ENCODE measurements at regions of chr16 and their contacts with region 1.

Region 1: DNA sequence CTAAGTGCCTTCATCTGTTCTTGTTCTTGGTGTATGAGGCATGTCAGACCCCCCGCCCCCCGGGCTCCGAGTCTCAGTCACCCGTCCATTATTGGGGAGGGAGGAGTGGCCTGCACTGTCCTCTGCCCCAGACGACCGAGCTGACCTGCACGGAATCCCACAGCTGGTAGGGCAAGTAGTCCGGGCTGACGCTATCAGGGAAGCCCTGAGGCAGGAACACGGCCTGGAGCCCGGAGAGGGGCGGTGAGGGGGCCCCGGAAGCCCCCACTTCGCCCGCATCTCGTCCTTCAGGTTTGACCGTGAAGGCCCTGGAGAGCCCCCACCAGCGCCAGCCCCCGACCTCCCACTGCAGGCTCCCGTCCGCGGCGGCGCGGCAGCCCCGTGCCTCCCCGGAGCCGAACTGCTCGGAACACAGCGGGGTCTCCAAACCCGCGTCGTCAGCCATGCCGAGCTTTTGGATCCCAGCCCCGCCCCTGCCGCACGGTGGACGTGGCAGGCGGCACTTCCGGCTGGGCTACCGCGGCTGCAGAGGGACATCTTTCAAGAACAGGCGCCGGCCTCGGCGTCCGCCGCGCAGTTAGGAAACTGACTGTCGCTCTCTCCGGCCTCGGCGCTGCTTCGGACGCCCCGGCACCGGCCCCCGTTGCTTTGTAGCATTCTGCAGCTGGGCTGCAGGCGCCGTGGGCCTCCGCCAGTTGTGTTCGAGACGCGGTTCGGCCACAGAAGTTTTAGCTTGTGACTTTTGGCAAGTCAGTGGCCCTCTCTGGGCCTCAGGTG is at the start of gene RUSF1:
- DNase-seq: peak; percentile 94
- ATAC-seq: peak; percentile 95 to 97
- total RNA-seq, gene RUSF1: 25.6 to 36.6 TPM

Region 2: DNA sequence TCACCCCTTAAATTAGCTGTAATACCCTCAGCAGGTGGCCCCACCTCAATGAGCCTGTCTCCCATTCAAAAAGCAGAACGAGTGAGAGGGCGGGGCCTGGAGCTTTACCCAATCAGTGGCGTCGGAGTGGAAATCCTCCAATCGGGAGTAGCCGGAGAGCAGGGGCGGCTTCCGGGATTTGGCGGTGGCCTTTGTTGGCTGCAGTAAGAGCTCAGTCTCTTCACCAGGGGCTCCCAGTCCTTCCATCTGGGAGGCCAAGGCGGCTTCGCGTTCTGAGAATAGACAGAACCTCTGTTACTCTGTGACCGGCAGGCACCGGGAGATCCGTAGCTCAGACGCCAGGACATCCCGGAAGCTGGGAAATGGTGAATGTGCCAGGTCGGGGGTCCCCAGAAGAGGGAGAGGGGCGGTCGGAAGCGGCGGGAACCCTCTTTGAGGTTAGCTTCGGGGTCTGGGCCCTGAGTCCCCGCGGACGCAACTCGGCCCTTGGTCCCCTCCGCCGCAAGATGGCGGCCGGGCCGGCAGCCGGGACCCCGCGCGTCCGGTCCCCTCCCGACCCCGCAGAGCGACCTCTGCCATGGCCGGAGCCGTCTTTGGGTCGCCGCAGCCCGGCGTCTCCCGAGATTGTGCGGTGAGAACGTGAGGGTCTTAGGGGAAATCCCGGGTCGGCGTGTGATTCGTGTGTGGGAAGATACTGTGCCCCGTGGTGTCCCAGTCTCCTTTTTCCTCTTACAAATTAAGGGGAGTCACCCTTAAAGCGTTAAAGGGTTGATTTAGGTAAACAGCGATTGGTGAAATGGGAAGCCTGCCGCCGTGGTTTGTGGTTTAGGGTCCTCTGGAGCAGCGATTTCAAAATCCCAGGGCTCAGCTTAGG is 205.2 kb after region 1 on chr16:
- intact Hi-C with region 1: loop called in 1 of 2 experiments (anchors 10 kb)
- DNase-seq: peak; percentile 96
- ATAC-seq: peak; percentile 96 to 97

Region 3: GRCh38 chr16:31873556-31874365 is 365.6 kb after region 1 on chr16 and contains the start of gene ZNF267:
- intact Hi-C with region 1: loop called in 1 of 2 experiments (anchors 10 kb)
- DNase-seq: peak; percentile 97
- ATAC-seq: peak; percentile 95 to 99
- total RNA-seq, gene ZNF267: 8.4 to 8.5 TPM

Measured in left cardiac atrium (tissue), 4 donors.